ENCODE measurements at regions of chr2 and their contacts with region 1.

Region 1: DNA sequence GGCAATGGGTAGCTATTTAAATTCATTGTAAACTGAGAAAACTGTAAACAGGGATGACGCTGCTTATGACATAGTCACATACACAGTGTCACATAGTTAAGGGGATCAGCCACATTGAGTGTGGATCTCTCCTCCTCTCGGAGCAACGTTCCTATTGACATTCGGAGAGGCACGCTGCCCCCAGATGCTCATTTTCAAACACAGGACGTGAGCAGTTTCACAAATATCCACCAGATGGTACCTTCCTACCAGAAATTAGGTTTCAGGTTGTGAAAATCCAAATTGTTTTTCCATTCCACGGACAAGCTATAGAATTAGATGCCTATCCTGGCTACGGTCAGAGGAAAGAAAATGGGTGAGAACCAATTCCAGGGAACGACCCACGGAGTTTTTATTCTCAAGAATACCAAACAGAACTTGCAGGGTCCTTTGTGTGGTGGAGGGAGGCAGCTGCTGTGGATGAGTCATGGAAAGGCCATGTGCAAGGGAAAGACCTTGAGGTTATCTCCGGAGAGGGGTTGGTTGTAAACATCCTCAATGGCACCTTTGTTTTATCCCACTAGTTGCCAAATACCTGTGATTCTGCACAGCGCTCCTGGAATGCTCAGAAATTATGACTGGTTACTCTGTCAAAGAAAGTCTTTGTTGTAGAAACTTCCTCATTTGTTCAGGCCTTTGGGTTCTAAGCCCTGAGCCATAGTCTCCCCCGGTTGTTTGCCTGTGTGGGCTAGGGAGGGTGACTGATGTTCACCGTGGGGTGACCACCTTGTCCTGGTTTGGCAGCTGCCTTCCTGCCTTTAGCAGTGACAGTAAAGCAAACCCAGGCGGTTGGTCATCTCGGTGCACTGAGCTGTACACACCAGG is 88.0 kb downstream of the ACTR3 start:
- DNase-seq: no peak
- ATAC-seq: peak; percentile 31
- H3K4me3 Mint-ChIP-seq: no peak overlapping the region
- H3K27ac Mint-ChIP-seq: no peak overlapping the region
- H3K4me1 Mint-ChIP-seq: peaks cover 5% of the 10 kb centered on the region
- H3K27me3 Mint-ChIP-seq: no peaks in the 10 kb centered on the region
- CTCF ChIP-seq: no peak

Region 2: DNA sequence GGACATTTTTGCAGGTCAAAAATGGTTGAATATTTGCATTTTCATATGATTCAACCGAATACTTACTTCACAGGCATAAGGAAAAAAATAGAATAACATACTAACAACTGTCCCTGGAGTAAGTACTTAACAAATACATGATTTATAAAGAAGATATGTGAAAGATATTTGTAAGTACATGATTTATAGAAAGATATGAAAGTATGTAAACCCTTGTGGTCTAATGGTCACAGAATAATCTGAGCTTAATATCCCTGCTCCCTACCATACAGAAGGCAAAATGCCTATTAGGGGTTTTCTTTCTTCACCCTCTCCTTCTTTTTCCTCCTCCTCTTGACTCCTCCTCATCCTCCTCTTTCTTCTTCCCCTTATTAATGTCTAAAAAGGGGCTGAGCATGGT is 108.6 kb before region 1 on chr2:
- CTCF ChIA-PET with region 1: no interaction called
- POLR2A ChIA-PET with region 1: no interaction called
- intact Hi-C with region 1: no loop called
- DNase-seq: no peak
- ATAC-seq: no peak
- H3K4me3 Mint-ChIP-seq: no peak overlapping the region
- H3K27ac Mint-ChIP-seq: no peak overlapping the region
- H3K4me1 Mint-ChIP-seq: peaks cover 18% of the 10 kb centered on the region
- H3K27me3 Mint-ChIP-seq: no peaks in the 10 kb centered on the region
- CTCF ChIP-seq: no peak

Region 3: DNA sequence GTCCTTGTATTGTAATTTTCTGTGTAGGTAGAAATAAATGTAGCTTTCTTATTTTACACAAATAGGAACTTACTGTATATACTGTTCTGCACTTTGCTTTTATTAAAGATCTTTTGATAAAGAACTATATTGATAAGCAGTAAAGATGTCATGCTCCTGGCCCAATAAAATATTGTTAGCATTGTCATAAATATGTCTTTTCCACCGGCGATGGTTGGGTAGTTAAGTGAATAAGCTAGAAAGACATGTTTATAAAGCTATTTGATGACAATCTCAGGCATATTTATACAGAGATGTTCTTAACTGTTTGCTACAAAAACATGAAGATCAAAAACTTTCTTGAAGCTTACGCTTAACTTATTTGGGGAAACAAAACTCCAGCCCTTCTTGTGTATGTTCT is 18.7 kb before region 1 on chr2:
- CTCF ChIA-PET with region 1: interaction called, 10 read pairs
- POLR2A ChIA-PET with region 1: interaction called, 3 read pairs
- intact Hi-C with region 1: no loop called
- DNase-seq: no peak
- ATAC-seq: no peak
- H3K4me3 Mint-ChIP-seq: no peak overlapping the region
- H3K27ac Mint-ChIP-seq: no peak overlapping the region
- H3K4me1 Mint-ChIP-seq: peaks cover 7% of the 10 kb centered on the region
- H3K27me3 Mint-ChIP-seq: no peaks in the 10 kb centered on the region
- CTCF ChIP-seq: no peak

Region 4: GRCh38 chr2:113967272-113967671 is 10.6 kb before region 1 on chr2:
- CTCF ChIA-PET with region 1: interaction called, 13 read pairs
- POLR2A ChIA-PET with region 1: interaction called, 5 read pairs
- intact Hi-C with region 1: no loop called
- DNase-seq: no peak
- ATAC-seq: peak; percentile 11
- H3K4me3 Mint-ChIP-seq: no peak overlapping the region
- H3K27ac Mint-ChIP-seq: peak overlapping the region; percentile 60
- H3K4me1 Mint-ChIP-seq: peaks cover 14% of the 10 kb centered on the region
- H3K27me3 Mint-ChIP-seq: no peaks in the 10 kb centered on the region
- CTCF ChIP-seq: no peak

Region 5: GRCh38 chr2:114261366-114261765 is 283.5 kb after region 1 on chr2:
- CTCF ChIA-PET with region 1: no interaction called
- POLR2A ChIA-PET with region 1: no interaction called
- intact Hi-C with region 1: no loop called
- DNase-seq: no peak
- ATAC-seq: no peak
- H3K4me3 Mint-ChIP-seq: no peak overlapping the region
- H3K27ac Mint-ChIP-seq: no peak overlapping the region
- H3K4me1 Mint-ChIP-seq: no peaks in the 10 kb centered on the region
- H3K27me3 Mint-ChIP-seq: peaks cover 6% of the 10 kb centered on the region
- CTCF ChIP-seq: no peak

Measured in activated CD8-positive, alpha-beta T cell treated with anti-CD3 and anti-CD28 coated beads for 36 hours (primary cell).